ENCODE measurements at regions of chr13 and their contacts with region 1.

Region 1: DNA sequence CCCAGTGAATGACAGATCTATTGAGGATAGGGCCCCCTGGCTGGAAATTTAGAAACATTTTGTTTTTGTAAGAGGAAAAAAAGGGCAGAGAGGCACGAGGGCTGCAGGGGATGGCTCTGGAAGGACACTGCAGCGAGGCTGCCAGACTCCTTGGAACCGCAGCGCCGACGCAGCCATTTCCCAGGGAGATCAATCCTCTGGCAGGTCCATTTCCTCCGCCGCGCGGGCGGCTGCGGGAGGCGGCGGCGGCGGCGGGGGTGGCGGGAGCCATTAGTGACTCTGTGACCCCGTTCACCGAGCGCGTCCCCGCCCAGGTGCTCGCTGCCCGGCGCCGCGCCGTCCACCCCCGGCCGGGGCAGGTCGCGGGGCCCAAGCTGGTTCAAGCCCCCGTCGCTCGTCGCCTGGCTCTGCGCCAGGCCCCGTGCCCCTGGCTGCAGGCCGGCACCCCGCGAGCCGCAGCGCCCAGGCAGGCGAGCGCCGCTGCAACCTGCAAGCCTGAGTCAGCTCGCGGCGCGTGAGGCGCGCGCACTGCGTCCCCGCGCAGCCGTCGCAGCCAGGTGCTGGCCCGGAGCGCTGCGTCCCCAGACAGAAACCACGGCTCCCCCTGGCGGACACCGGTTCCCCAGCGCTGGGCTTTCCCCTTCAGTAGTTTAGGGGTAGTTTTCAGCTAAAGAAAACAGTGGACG is 192.6 kb downstream of the KATNAL1 start:
- DNase-seq: peak; percentile 94
- H3K4me3 Mint-ChIP-seq: peak overlapping the region; percentile 74
- H3K27ac Mint-ChIP-seq: no peak overlapping the region
- H3K4me1 Mint-ChIP-seq: peaks cover 42% of the 10 kb centered on the region
- H3K27me3 Mint-ChIP-seq: peaks cover 8% of the 10 kb centered on the region

Region 2: GRCh38 chr13:29583073-29583785 is 531.5 kb before region 1 on chr13:
- CTCF ChIA-PET with region 1: no interaction called
- POLR2A ChIA-PET with region 1: no interaction called
- DNase-seq: no peak
- H3K4me3 Mint-ChIP-seq: no peak overlapping the region
- H3K27ac Mint-ChIP-seq: no peak overlapping the region
- H3K4me1 Mint-ChIP-seq: peaks cover 35% of the 10 kb centered on the region
- H3K27me3 Mint-ChIP-seq: no peaks in the 10 kb centered on the region

Region 3: DNA sequence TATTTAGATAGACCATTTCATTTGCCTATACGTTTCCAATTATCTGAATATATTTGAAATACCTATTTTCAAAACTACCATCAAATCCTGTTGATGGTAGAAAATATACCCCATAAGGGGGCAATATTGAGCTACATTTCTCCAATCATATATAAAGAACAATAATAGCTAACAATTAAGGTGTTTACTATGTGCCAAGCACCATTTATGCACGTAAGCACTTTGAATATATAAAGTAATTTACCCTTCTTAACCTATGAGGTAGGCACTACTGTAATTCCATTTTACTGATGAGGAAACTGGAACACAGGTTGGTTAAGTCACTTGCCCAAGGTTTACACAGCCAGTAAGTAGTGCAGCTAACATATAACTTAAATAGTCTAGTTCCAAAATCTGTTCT is 343.5 kb before region 1 on chr13:
- CTCF ChIA-PET with region 1: interaction called, 318 read pairs
- POLR2A ChIA-PET with region 1: interaction called, 10 read pairs
- DNase-seq: no peak
- H3K4me3 Mint-ChIP-seq: no peak overlapping the region
- H3K27ac Mint-ChIP-seq: no peak overlapping the region
- H3K4me1 Mint-ChIP-seq: no peaks in the 10 kb centered on the region
- H3K27me3 Mint-ChIP-seq: no peaks in the 10 kb centered on the region

Region 4: GRCh38 chr13:29840585-29840984 is 274.1 kb before region 1 on chr13:
- CTCF ChIA-PET with region 1: interaction called, 167 read pairs
- POLR2A ChIA-PET with region 1: interaction called, 4 read pairs
- DNase-seq: no peak
- H3K4me3 Mint-ChIP-seq: no peak overlapping the region
- H3K27ac Mint-ChIP-seq: no peak overlapping the region
- H3K4me1 Mint-ChIP-seq: peaks cover 18% of the 10 kb centered on the region
- H3K27me3 Mint-ChIP-seq: peaks cover 1% of the 10 kb centered on the region

Region 5: DNA sequence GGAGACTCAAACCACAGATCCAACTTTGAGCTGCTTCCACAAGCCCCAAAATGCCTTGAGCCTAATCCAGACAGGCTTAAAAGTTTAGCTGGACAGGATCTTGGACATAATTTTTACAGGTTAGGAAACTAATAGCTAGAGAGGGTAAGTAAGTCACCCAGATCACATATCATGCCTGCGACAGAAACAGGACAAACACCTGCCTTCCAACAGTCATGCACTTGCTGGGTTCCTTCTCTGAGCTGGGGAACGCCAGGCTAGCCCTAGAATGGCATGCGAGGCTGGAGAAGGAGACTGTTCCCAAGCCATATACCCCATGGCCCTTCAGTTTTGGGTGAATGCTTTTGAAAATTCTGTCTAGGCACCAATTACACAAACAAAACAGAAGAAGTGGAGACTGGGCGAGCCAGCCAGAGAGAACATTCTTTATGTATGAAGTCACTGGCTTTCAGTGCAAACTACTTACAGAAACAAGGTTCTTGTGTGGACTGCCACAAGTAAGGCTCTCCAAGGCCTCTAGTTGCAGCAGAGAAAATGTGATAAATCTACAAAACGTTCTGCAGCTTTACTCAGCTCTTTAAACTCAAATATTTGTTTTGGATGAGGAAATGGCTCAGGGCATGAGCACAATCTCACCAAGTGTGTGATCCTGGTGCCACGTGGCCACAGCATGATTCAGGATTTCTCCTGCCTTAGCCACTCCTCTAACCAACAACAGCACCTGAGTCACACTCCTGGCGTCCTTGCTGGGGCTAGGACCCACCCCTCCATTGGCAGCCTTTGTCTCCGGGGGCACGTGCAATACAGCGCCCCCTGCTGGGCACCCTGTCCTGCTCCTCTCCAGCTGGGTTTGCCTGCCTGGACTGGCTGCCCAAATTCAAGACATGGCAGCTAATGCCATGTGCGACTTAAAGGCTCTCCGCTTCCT is 190.9 kb before region 1 on chr13:
- CTCF ChIA-PET with region 1: interaction called, 11 read pairs
- POLR2A ChIA-PET with region 1: no interaction called
- DNase-seq: peak; percentile 60
- H3K4me3 Mint-ChIP-seq: no peak overlapping the region
- H3K27ac Mint-ChIP-seq: no peak overlapping the region
- H3K4me1 Mint-ChIP-seq: peaks cover 38% of the 10 kb centered on the region
- H3K27me3 Mint-ChIP-seq: no peaks in the 10 kb centered on the region

Region 6: DNA sequence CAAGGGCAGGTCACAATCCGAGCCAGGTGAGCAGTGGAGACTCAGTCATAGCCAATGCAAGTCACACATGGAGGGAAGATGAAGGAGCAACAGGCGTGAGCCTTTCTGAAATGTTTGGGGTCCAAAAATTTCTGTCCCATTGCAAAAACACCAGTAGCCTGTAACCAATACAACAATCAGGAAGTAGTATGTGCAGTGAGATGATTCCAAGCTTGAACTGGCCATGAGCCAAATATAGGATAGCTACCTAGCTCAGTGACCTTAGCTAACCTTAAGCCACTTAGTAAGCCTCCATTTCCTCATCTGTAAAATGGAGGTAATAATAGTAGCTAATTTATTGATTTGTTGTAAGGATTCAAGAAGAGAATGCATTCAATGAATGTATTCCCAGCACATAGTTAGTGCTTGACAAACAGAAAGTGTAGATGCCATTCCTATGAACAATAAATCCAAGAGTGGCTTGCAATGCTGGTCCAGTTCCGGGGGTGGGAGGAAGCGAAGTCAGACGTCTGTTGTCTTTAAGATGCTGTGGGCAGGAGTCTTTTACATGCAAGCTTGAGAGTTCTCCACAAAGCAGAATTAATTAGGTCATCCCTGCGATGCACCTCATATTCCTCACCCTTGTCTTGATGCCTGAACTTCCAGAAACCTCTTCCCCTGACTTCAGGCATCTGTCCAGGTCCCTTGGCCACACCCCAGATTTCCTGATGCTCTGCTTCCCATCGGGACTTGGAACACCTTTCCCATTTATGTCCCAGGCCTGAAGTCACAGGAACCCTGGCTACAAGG is 68.6 kb before region 1 on chr13:
- CTCF ChIA-PET with region 1: interaction called, 10 read pairs
- POLR2A ChIA-PET with region 1: no interaction called
- DNase-seq: no peak
- H3K4me3 Mint-ChIP-seq: no peak overlapping the region
- H3K27ac Mint-ChIP-seq: peak overlapping the region; percentile 8
- H3K4me1 Mint-ChIP-seq: peaks cover 39% of the 10 kb centered on the region
- H3K27me3 Mint-ChIP-seq: no peaks in the 10 kb centered on the region

Region 7: GRCh38 chr13:30125422-30126073 is 10.8 kb after region 1 on chr13:
- CTCF ChIA-PET with region 1: interaction called, 65 read pairs
- POLR2A ChIA-PET with region 1: interaction called, 4 read pairs
- DNase-seq: no peak
- H3K4me3 Mint-ChIP-seq: no peak overlapping the region
- H3K27ac Mint-ChIP-seq: no peak overlapping the region
- H3K4me1 Mint-ChIP-seq: peaks cover 18% of the 10 kb centered on the region
- H3K27me3 Mint-ChIP-seq: no peaks in the 10 kb centered on the region

Region 8: DNA sequence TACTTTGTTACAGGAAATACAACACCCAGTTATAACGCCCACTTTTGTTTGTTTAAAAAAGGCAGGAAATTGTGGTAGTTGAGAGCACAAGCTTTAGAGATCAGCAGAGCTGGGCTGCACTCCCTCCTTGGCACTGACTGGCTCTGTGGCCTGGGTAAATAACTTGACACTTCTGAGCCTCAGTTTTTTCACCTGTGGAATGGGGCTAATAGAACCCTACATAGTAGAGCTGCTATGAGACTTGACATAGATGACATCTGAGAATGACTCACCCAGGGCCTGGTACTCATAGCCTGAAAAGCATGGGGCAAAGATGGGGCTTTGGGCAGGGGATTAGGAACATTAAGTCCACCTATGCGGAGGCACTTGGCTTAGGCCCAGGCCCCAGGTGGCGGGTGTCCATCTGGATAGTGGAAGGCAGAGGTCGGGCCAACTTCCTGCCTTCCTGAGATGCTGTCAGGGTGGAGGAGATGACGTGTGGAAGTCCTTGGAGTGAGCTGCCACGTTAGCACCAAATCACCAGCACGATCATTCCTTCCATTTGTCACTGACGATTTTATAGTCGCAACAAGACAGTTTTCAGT is 33.5 kb after region 1 on chr13:
- CTCF ChIA-PET with region 1: interaction called, 10 read pairs
- POLR2A ChIA-PET with region 1: interaction called, 6 read pairs
- DNase-seq: peak; percentile 75
- H3K4me3 Mint-ChIP-seq: peak overlapping the region; percentile 5
- H3K27ac Mint-ChIP-seq: peak overlapping the region; percentile 96
- H3K4me1 Mint-ChIP-seq: peaks cover 90% of the 10 kb centered on the region
- H3K27me3 Mint-ChIP-seq: no peaks in the 10 kb centered on the region

Measured in activated CD4-positive, alpha-beta memory T cell treated with anti-CD3 and anti-CD28 coated beads, Interleukin-2, amount 10 ng/mL, durations not matched to agents 7 days and 5 days (primary cell).